Caco-2 (cell line): ENCODE measurements at regions of chr12 and their contacts with region 1.

Region 1: GRCh38 chr12:59372956-59373355 is 222.9 kb upstream of the SLC16A7 start:
- DNase-seq: peak; percentile 40 to 46
- H3K4me3 ChIP-seq: no peak overlapping the region
- H3K4me3 Mint-ChIP-seq: no peak overlapping the region
- H3K27ac Mint-ChIP-seq: no peak overlapping the region
- H3K4me1 ChIP-seq: peaks cover 4% of the 10 kb centered on the region
- H3K4me1 Mint-ChIP-seq: no peaks in the 10 kb centered on the region
- H3K27me3 ChIP-seq: no peaks in the 10 kb centered on the region
- H3K27me3 Mint-ChIP-seq: peaks cover 17% of the 10 kb centered on the region
- CTCF ChIP-seq: peak in 1 of 2 experiments; percentile 45

Region 2: GRCh38 chr12:57983146-57983857 is 1389.7 kb before region 1 on chr12:
- CTCF ChIA-PET with region 1: no interaction called
- POLR2A ChIA-PET with region 1: no interaction called
- intact Hi-C with region 1: loop called (anchors 10 kb)
- DNase-seq: peak in 1 of 2 experiments; percentile 50
- H3K4me3 ChIP-seq: no peak overlapping the region
- H3K4me3 Mint-ChIP-seq: no peak overlapping the region
- H3K27ac Mint-ChIP-seq: no peak overlapping the region
- H3K4me1 ChIP-seq: no peaks in the 10 kb centered on the region
- H3K4me1 Mint-ChIP-seq: no peaks in the 10 kb centered on the region
- H3K27me3 ChIP-seq: no peaks in the 10 kb centered on the region
- H3K27me3 Mint-ChIP-seq: no peaks in the 10 kb centered on the region
- CTCF ChIP-seq: peak; percentile 33 to 65

Region 3: DNA sequence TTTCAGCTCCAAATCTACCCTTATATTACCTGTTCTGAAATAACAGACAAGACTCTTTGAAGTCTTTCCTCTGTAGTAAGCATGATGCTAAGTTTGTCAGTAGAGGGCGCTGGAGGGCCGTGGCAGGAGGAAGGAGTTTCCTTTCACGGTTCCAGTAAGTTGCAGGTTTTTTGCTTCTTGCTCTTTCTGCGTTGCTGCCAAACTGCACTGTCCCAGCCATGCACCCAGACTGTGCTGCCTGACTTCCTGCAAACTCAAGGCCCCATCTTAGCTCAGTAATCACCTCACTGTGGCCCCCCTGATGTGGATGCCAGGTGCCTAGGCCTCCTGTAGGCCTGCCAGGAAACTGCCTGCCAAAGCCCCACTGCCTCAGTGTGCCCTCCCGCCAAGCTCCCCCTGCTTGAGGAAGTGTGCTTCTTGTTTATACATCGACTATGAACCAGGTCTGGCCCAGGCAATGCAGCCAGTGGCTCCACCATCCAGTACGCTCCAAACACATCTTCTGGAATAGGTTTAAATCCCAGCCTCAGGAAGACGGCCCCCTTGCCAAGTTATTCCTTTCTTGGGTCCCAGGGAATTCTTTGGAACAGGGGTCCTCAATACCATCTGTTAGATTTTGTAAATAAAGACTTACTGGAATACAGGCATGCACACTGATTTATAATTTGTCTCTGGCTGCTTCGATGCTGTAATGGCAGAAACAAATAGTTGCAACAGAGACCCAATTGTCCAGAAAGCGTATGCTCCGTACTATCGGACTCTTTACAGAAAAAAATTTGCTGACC is 258.9 kb before region 1 on chr12:
- CTCF ChIA-PET with region 1: interaction called, 3 read pairs
- POLR2A ChIA-PET with region 1: no interaction called
- intact Hi-C with region 1: loop called (anchors 1 kb)
- DNase-seq: peak; percentile 74 to 80
- H3K4me3 ChIP-seq: no peak overlapping the region
- H3K4me3 Mint-ChIP-seq: no peak overlapping the region
- H3K27ac Mint-ChIP-seq: no peak overlapping the region
- H3K4me1 ChIP-seq: no peaks in the 10 kb centered on the region
- H3K4me1 Mint-ChIP-seq: no peaks in the 10 kb centered on the region
- H3K27me3 ChIP-seq: no peaks in the 10 kb centered on the region
- H3K27me3 Mint-ChIP-seq: no peaks in the 10 kb centered on the region
- CTCF ChIP-seq: peak; percentile 88 to 89

Region 4: GRCh38 chr12:59164991-59165718 is 207.8 kb before region 1 on chr12:
- CTCF ChIA-PET with region 1: no interaction called
- POLR2A ChIA-PET with region 1: no interaction called
- intact Hi-C with region 1: loop called (anchors 1 kb)
- DNase-seq: peak in 1 of 2 experiments; percentile 32
- H3K4me3 ChIP-seq: no peak overlapping the region
- H3K4me3 Mint-ChIP-seq: no peak overlapping the region
- H3K27ac Mint-ChIP-seq: no peak overlapping the region
- H3K4me1 ChIP-seq: peaks cover 19% of the 10 kb centered on the region
- H3K4me1 Mint-ChIP-seq: peaks cover 14% of the 10 kb centered on the region
- H3K27me3 ChIP-seq: no peaks in the 10 kb centered on the region
- H3K27me3 Mint-ChIP-seq: no peaks in the 10 kb centered on the region
- CTCF ChIP-seq: peak in 1 of 2 experiments; percentile 31

Region 5: GRCh38 chr12:59173686-59174085 is 199.3 kb before region 1 on chr12:
- CTCF ChIA-PET with region 1: no interaction called
- POLR2A ChIA-PET with region 1: no interaction called
- intact Hi-C with region 1: loop called (anchors 1 kb)
- DNase-seq: no peak
- H3K4me3 ChIP-seq: no peak overlapping the region
- H3K4me3 Mint-ChIP-seq: no peak overlapping the region
- H3K27ac Mint-ChIP-seq: no peak overlapping the region
- H3K4me1 ChIP-seq: no peaks in the 10 kb centered on the region
- H3K4me1 Mint-ChIP-seq: no peaks in the 10 kb centered on the region
- H3K27me3 ChIP-seq: no peaks in the 10 kb centered on the region
- H3K27me3 Mint-ChIP-seq: no peaks in the 10 kb centered on the region
- CTCF ChIP-seq: peak in 1 of 2 experiments; percentile 15